Naive thymus-derived CD4-positive, alpha-beta T cell (primary cell): ENCODE measurements at regions of chr10 and their contacts with region 1.

Region 1: GRCh38 chr10:48885383-48885782 is 54.3 kb downstream of the LRRC18 start:
- DNase-seq: no peak
- ATAC-seq: no peak
- H3K4me3 ChIP-seq: no peak overlapping the region
- H3K4me3 Mint-ChIP-seq: no peak overlapping the region
- H3K27ac ChIP-seq: no peak overlapping the region
- H3K27ac Mint-ChIP-seq: no peak overlapping the region
- H3K4me1 ChIP-seq: no peaks in the 10 kb centered on the region
- H3K4me1 Mint-ChIP-seq: no peaks in the 10 kb centered on the region
- H3K27me3 ChIP-seq: no peaks in the 10 kb centered on the region
- H3K27me3 Mint-ChIP-seq: peaks cover 0 to 7% (median 0%) of the 10 kb centered on the region in 5 donors

Region 2: GRCh38 chr10:48765039-48765438 is 120.3 kb before region 1 on chr10:
- CTCF ChIA-PET with region 1: no interaction called
- POLR2A ChIA-PET with region 1: no interaction called
- intact Hi-C with region 1: loop called in 1 of 2 experiments (anchors 10 kb)
- DNase-seq: no peak
- ATAC-seq: no peak
- H3K4me3 ChIP-seq: no peak overlapping the region
- H3K4me3 Mint-ChIP-seq: no peak overlapping the region
- H3K27ac ChIP-seq: no peak overlapping the region
- H3K27ac Mint-ChIP-seq: no peak overlapping the region
- H3K4me1 ChIP-seq: no peaks in the 10 kb centered on the region
- H3K4me1 Mint-ChIP-seq: peaks cover 0 to 9% (median 0%) of the 10 kb centered on the region in 7 donors
- H3K27me3 ChIP-seq: no peaks in the 10 kb centered on the region
- H3K27me3 Mint-ChIP-seq: peaks cover 0 to 20% (median 14%) of the 10 kb centered on the region in 5 donors

Region 3: DNA sequence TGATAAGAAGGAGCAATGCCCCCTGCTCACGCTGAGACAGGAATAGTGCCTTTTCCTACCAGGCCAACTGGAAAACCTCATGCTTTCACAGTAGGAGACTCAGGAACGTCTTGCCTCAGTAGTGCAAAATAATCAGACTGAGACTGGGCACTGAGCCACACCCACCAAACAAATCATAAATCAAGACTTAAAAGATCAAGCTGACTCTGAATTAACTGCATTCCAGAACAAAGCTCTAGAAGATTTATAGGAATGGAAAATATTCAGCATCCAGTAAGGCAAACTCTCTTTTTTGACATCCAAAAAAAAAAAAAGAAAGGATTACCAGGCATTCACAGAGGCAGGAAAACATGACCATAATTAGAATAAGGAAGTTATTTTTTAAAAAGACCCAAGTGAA is 694.2 kb after region 1 on chr10:
- CTCF ChIA-PET with region 1: no interaction called
- POLR2A ChIA-PET with region 1: no interaction called
- intact Hi-C with region 1: no loop called
- DNase-seq: no peak
- ATAC-seq: no peak
- H3K4me3 ChIP-seq: no peak overlapping the region
- H3K4me3 Mint-ChIP-seq: no peak overlapping the region
- H3K27ac ChIP-seq: no peak overlapping the region
- H3K27ac Mint-ChIP-seq: no peak overlapping the region
- H3K4me1 ChIP-seq: no peaks in the 10 kb centered on the region
- H3K4me1 Mint-ChIP-seq: peaks cover 0 to 7% (median 0%) of the 10 kb centered on the region in 7 donors
- H3K27me3 ChIP-seq: no peaks in the 10 kb centered on the region
- H3K27me3 Mint-ChIP-seq: peaks cover 24 to 38% (median 37%) of the 10 kb centered on the region in 5 donors